ENCODE measurements at regions of chr17 and their contacts with region 1.

Region 1: DNA sequence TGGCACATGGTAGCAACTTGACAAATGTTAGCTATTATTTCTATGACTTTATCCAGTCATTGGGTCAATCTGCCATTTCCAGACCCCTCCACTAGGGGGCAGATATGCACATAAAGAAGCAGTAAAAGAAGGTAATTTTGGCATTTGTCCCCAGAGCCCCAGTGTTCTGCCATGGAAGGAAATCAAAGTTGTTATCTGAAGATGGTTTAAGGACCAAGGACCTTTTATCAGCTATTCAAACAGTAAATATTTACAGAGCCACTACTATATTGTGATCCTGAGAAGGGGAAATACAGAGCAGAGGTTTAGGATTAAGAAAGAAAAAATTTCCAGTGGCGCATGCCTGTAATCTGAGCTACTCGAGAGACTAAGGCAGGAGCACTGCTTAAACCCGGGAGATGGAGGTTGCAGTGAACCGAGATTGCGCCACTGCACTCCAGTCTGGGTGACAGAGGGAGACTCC is 20.0 kb downstream of the TRAF4 start:
- DNase-seq: peak; percentile 84
- H3K4me3 ChIP-seq: no peak overlapping the region
- H3K27ac ChIP-seq: no peak overlapping the region
- H3K4me1 ChIP-seq: no peaks in the 10 kb centered on the region
- CTCF ChIP-seq: peak; percentile 99

Region 2: DNA sequence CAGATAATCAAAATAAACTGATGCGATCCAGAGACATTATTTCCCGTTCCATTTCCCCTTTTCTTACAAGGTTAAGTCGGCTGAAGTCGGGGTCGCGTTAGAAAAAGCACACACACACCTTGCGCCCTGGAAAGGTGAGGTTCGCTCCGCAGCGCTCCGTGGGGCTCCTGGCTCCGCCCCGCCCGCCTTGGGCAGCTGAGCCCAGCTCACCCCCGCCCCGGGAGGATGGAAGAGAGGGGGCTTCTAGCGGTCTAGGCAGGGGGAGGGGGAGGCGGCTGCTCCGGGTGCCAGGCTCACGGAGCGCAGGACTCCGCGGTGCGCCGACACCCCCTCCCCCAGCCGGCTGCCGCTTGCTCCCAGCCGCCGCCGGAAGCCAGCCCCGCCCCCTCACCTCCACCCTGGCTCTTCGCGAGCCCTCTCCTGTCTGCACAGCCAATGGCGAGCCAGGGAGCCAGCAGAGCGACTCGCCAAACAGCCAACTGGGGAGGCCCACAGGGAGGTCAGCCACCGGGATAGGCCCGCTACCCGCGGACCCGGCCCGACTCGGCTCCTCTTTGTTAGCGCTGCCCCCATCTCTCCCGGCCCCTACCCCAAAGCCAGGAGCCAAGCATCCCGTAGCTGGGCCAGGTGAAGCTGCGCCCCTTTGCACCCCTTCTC is 48.4 kb after region 1 on chr17:
- CTCF ChIA-PET with region 1: no interaction called
- POLR2A ChIA-PET with region 1: no interaction called
- intact Hi-C with region 1: loop called (anchors 5 kb)
- DNase-seq: peak; percentile 97
- H3K4me3 ChIP-seq: peak overlapping the region; percentile 75
- H3K27ac ChIP-seq: peak overlapping the region; percentile 70
- H3K4me1 ChIP-seq: peaks cover 33% of the 10 kb centered on the region
- CTCF ChIP-seq: no peak

Region 3: DNA sequence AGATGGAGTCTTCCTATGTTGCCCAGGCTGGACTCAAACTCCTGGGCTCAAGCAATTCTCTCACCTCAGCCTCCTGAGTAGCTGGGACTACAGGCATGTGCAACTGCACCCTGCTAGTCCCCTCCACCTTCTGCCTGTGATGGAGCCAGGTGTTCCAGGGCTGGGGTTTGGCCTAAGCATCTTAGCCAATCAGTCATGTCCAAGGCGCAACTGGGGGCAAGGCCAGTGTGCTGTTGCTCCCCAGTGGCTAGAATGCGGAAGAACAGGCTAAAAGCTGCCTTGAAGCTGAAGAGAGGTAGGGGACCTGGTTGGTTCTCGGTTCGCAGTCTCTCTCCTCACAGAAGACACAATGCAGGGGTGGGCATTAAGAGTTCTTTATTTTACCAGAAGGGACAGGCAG is 115.1 kb after region 1 on chr17:
- CTCF ChIA-PET with region 1: no interaction called
- POLR2A ChIA-PET with region 1: interaction called, 3 read pairs
- intact Hi-C with region 1: loop called (anchors 1 kb)
- DNase-seq: peak; percentile 68
- H3K4me3 ChIP-seq: no peak overlapping the region
- H3K27ac ChIP-seq: no peak overlapping the region
- H3K4me1 ChIP-seq: no peaks in the 10 kb centered on the region
- CTCF ChIP-seq: peak; percentile 66

Region 4: DNA sequence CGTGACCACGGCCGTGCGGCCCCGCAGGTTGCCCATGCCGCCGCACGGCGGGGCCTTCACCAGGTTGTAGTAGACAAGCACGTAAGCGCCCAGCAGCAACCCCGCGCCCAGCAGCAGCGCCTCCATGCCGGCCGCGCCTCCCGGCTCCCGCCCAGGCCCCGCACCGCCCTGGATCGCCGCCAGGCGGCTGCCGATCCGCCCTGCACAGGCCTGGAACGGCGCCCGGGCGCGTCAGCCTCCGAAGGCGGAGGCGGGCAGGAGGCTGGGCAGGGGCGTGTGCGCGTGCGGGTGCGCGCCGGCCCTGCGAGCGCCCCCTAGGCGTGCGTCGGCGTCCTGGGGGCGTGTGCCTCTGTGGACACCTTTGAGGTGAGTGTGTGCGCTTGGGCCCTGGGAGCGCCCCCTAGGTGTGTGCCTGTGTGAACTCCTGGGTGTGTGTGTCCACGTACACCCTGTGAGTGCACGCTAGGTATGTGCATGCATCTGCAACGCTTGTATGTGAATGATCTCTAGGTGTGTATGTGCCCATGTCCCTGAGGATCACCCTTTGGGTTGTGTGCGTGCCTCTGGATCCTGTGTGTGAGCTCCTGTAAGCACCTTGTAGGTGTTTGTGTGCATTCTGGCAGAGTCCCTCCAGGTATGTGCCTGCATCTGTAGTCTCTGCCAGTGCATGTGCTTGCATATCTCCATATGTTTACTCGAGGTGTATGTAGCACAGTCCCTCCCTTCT is 139.1 kb after region 1 on chr17 and contains the start of gene DHRS13:
- CTCF ChIA-PET with region 1: interaction called, 3 read pairs
- POLR2A ChIA-PET with region 1: interaction called, 3 read pairs
- intact Hi-C with region 1: loop called (anchors 2 kb)
- DNase-seq: peak; percentile 97
- H3K4me3 ChIP-seq: peak within 1 kb of the TSS; percentile 77
- H3K27ac ChIP-seq: peak within 1 kb of the TSS; percentile 80
- H3K4me1 ChIP-seq: peaks cover 28% of the 10 kb centered on the region
- CTCF ChIP-seq: peak; percentile 97
- total RNA-seq, gene DHRS13: 27.1 and 28.4 TPM in 2 replicates

Region 5: DNA sequence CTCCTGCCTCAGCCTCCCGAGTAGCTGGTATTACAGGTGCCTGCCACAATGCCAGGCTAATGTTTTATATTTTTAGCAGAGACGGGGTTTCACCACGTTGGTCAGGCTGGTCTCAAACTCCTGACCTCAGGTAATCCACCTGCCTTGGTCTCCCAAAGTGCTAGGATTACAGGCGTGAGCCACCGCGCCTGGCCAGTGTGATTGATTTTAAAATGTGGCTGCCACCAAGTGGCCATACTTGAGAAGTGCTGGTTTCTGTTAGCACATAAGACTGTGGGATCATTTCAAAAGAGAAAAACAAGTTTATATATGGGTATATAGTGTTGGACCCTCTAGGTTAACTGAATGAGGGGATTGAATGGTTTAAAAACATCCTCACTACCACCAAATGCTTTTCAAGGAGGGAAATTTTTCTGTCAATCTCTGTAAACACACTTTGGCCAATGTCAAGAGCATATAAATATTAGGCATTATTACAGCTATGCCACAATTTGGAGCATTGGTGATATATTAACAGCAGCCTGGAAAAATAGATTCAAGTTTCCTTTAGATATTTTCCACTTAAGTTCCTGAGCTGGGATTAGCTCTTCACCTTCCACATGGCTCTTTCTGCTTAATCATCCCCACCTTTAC is 152.6 kb after region 1 on chr17:
- CTCF ChIA-PET with region 1: interaction called, 3 read pairs
- POLR2A ChIA-PET with region 1: no interaction called
- intact Hi-C with region 1: loop called (anchors 1 kb)
- DNase-seq: peak; percentile 62
- H3K4me3 ChIP-seq: no peak overlapping the region
- H3K27ac ChIP-seq: no peak overlapping the region
- H3K4me1 ChIP-seq: no peaks in the 10 kb centered on the region
- CTCF ChIP-seq: peak; percentile 85